ENCODE measurements at regions of chr11 and their contacts with region 1.

Region 1: DNA sequence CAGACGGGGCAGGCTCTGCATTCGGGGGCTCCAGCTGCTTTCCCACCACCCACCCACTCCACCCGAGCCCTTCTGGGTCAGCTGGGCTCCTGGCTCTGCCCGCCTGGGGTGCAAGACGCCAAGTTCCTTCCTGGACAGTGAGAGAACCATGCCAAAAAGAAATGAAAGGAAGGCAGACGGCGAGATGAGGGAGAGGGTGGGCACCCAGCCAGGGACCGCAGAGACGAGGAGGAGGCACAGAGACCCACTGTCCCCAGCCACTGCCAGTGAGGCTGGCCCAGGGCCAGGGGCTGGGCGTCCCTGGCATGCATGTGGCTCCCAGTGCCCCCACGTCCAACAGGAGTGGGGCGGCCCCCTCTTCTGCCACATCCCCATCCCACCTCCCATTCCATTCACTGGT is 10.8 kb upstream of the CD81 start:
- DNase-seq: peak; percentile 44 to 54
- H3K4me3 ChIP-seq: no peak overlapping the region
- H3K27ac ChIP-seq: peak overlapping the region in 1 of 3 donors; percentile 28
- H3K4me1 ChIP-seq: peaks cover 5 to 13% of the 10 kb centered on the region in 2 donors
- H3K27me3 ChIP-seq: no peaks in the 10 kb centered on the region
- CTCF ChIP-seq: no peak
- POLR2A ChIP-seq: no peak

Region 2: GRCh38 chr11:2325719-2326118 is 40.5 kb before region 1 on chr11:
- intact Hi-C with region 1: loop called (anchors 5 kb)
- DNase-seq: peak; percentile 61 to 76
- H3K4me3 ChIP-seq: no peak overlapping the region
- H3K27ac ChIP-seq: no peak overlapping the region
- H3K4me1 ChIP-seq: no peaks in the 10 kb centered on the region
- H3K27me3 ChIP-seq: no peaks in the 10 kb centered on the region
- CTCF ChIP-seq: no peak
- POLR2A ChIP-seq: no peak

Region 3: DNA sequence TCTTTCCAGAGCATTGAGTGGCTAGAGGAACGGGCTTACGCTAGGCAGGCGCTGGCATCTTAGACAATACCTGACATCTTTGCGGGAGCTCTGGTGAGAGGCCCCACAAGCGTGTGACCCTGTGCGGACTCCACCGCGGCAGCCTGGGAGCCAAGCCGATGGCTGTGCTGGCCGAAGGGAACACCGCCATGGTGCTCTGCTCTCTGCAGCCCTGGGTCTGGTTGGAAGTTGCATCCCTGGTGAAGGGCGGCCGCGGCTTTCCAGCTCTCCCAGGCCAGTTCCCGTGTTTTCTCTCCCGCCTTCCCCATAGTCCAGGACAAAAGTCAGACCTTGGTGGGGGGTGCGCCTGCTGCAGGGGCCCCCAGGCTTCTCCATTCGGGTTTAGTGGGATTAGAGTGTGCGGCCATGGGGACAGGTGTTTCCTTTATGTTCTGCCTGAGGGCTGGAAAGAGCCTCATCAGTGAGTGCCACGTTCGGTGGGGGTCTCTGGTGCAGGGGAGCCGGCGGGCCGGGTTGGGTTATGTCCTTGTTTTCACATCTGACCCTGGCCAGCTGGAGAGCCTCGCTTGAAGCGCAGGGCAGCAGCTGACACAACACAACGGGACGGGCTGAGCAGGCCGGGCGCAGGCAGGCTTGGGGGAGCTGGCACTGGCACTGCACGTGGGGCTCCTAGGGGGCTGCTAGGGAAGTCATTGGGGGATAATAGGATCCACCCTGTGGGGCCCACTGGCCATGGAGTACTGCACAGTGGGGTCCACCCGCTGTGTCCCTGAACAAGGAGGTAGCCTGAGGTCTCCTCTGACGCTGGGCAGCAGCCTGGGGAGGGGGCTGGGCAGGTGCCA is 173.3 kb after region 1 on chr11:
- intact Hi-C with region 1: no loop called
- DNase-seq: peak; percentile 0 to 2
- H3K4me3 ChIP-seq: no peak overlapping the region
- H3K27ac ChIP-seq: no peak overlapping the region
- H3K4me1 ChIP-seq: no peaks in the 10 kb centered on the region
- H3K27me3 ChIP-seq: no peaks in the 10 kb centered on the region
- CTCF ChIP-seq: no peak
- POLR2A ChIP-seq: no peak

Region 4: DNA sequence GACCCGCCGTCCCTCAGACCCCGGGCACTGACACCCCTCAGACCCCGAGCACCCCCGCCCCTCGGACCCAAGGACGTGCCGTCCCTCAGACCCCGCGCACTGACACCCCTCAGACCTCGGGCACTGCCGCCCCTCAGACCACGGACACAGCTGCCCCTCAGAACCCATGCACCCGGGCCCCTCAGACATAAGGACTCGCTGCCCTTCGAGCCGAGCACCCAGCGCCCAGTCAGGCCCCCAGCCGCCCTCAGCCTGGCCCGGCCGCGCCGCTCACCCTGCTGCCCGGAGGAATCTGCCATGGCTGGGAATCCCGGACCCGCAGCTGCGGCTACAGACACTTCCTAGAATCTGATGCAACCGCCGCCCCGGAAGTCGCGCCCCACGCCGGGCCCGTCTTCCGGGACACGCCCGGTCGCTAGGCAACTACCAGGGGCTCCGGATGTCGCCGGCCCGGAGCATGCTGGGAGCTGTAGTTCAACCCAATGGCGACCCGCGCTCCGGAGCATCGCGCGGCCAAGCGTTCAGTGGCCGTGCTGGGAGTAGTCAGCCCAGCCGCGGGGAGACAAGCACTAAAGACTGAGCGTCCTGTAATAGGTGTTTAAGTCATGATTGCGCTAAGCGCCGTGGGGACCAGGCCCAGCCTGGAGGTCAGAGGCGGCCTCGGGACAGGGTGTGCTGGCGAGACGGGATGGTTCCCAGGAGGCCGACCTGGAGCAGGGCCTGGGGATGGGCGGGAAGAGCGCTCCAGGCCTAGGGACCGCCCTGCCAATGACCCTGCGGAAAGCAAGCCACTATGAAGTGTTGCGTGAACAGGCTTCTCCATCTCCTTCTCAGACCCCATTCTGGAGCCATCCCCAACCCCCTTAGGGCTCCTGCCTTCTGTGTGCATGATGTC is 691.1 kb after region 1 on chr11 and contains the start of gene CARS1:
- intact Hi-C with region 1: no loop called
- DNase-seq: peak; percentile 96
- H3K4me3 ChIP-seq: peak within 1 kb of the TSS; percentile 79 to 96 (median 91)
- H3K27ac ChIP-seq: peak within 1 kb of the TSS; percentile 32 to 75 (median 71)
- H3K4me1 ChIP-seq: peaks cover 20 to 26% of the 10 kb centered on the region in 2 donors
- H3K27me3 ChIP-seq: no peaks in the 10 kb centered on the region
- CTCF ChIP-seq: no peak
- POLR2A ChIP-seq: peak in 1 of 2 donors; percentile 61
- total RNA-seq, gene CARS1: 36.7 to 56.2 (median 50.1) TPM

Measured in thyroid gland (tissue), 4 donors.